Posterior vena cava (tissue), 2 donors: ENCODE measurements at regions of chr1 and their contacts with region 1.

Region 1: DNA sequence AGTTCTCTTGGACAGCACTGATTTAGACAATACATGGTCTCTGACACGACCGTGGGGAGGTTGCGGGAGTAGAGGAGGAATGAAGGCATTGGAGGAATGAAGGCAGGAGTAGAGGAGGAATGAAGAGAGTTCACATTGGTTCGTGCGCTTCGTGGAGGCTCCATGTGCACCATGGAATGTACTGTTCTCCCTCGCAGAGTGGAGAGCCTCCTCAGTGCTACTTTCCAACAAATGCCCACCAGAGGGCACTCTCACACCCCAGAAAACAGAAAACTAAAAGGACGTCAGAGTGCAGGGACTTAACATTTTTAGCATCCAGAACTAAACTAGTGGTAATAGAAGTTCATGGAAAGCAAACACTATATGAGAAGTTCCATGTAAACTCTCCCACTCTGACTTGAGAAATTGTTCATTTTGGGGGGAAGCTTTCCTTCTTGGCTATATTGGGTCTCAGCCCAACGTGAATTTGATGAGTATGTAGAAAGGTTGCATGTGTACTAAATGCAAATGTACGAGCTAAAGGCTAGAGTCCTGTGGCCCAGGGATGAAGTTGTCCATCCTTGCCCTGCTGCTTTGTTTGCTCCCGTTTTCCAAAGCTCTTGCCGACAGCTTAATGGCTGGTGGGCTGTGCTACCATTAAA is 211.6 kb downstream of the LMX1A start:
- DNase-seq: no peak

Region 2: DNA sequence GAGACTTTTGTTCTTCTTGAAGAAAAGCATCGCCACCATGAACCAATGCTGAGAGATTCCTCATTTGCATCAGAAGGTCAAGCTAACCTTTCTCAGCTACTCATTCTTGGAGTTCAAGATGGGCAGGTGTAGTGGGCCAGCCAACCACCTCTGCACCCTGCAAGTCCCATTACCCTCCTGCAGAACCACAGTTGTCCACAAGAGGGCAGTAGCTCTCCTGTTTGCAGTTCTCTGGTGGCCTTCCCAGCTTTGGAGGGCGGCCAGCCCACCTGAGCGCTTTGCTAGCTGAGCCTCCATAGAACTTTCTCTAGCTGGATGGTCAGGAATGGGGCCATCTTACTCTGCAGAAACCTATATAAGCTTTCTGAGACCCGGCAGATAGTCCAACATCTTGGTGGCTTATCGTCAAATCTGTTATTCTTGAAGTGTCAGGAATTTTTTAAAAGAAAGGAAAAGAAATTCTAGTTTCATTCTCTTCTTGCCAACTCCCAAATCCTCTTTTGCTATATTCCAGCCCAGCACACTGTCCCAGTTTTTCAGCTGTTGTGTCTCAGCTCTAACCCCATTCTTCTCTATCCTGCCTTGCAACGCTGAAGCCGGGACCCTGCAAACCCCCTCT is 222.6 kb after region 1 on chr1:
- intact Hi-C with region 1: no loop called
- DNase-seq: peak; percentile 85

Region 3: GRCh38 chr1:165580941-165581871 is 436.3 kb after region 1 on chr1:
- intact Hi-C with region 1: loop called in 1 of 2 experiments (anchors 10 kb)
- DNase-seq: no peak